GM12878 (cell line): ENCODE measurements at regions of chr15 and their contacts with region 1.

Region 1: GRCh38 chr15:30991255-30992072 is at the start of gene MTMR10:
- DNase-seq: no peak
- ATAC-seq: peak; percentile 96
- H3K4me3 ChIP-seq: peak within 1 kb of the TSS; percentile 99
- H3K27ac ChIP-seq: peak within 1 kb of the TSS; percentile 78
- H3K4me1 ChIP-seq: peaks cover 5% of the 10 kb centered on the region; the same call in 1 of the 2 replicates
- H3K27me3 ChIP-seq: no peaks in the 10 kb centered on the region
- CTCF ChIP-seq: no peak
- EP300 ChIP-seq: no peak
- POLR2A ChIP-seq: peak; percentile 94
- RAD21 ChIP-seq: 0 out of 2 replicates have a peak, but pooled peaks have one; percentile 4
- polyA plus RNA-seq, gene MTMR10: 1.9 to 3.6 TPM

Region 2: DNA sequence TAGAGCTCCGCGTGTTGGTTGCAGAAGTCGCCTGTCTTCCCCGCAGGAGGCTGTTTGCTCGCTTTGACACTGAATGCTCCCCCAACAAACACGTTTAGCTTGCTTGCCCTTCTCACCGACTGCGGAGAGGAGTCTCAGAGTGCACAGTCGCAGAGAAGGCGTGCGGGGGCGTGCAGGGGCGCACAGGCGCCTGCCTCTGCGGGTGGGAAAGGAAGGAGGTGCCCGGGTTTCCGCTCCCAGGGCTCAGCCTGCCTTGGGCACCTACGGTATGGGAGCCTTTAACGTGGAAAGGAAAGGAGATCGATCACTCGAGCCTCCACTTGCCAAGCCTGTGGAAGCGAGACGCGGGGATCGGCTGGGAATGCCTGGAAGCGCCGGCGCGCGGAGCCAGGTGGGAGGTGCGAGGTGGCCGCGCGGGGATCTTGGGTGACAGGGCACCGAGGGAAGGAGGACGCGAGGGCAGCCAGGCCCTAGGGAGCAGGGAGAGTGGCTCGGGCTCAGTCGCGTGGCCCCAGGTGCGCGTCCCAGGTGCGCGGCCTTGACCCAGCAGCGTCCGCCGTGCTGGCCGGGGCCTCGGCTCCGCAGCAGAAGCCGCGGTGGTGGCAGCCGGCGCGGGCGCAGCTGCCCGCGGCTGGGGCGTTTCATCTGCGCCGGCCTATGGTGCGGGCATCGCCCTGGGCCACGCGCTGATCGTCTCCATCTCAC is 87.8 kb before region 1 on chr15 and contains the start of gene FAN1:
- CTCF ChIA-PET with region 1: no interaction called
- POLR2A ChIA-PET with region 1: no interaction called
- RAD21 ChIA-PET with region 1: interaction called, 4 read pairs
- SMC1A ChIA-PET with region 1: no interaction called
- in situ Hi-C with region 1: no loop called
- intact Hi-C with region 1: loop called (anchors 5 kb)
- DNase-seq: peak; percentile 77
- ATAC-seq: peak; percentile 94
- H3K4me3 ChIP-seq: peak within 1 kb of the TSS; percentile 73
- H3K27ac ChIP-seq: peak within 1 kb of the TSS; percentile 68
- H3K4me1 ChIP-seq: no peaks in the 10 kb centered on the region
- H3K27me3 ChIP-seq: no peaks in the 10 kb centered on the region
- CTCF ChIP-seq: no peak
- EP300 ChIP-seq: no peak
- POLR2A ChIP-seq: peak; percentile 93
- RAD21 ChIP-seq: no peak
- polyA plus RNA-seq, gene FAN1: 0.55 to 1.0 TPM

Region 3: GRCh38 chr15:31004220-31004733 is 12.8 kb after region 1 on chr15:
- CTCF ChIA-PET with region 1: interaction called, 3 read pairs
- POLR2A ChIA-PET with region 1: interaction called, 4 read pairs
- RAD21 ChIA-PET with region 1: interaction called, 4 read pairs
- SMC1A ChIA-PET with region 1: interaction called, 4 read pairs
- in situ Hi-C with region 1: no loop called
- intact Hi-C with region 1: loop called (anchors 1 kb)
- DNase-seq: peak; percentile 99
- ATAC-seq: peak; percentile 95
- H3K4me3 ChIP-seq: 0 out of 2 replicates have a peak overlapping the region, but pooled peaks have one; percentile 14
- H3K27ac ChIP-seq: peak overlapping the region; percentile 29
- H3K4me1 ChIP-seq: peaks cover 19% of the 10 kb centered on the region
- H3K27me3 ChIP-seq: no peaks in the 10 kb centered on the region
- CTCF ChIP-seq: no peak
- EP300 ChIP-seq: peak; percentile 74 to 92; a peak in 3 of 4 replicates
- POLR2A ChIP-seq: peak; percentile 52; the same call in 1 of the 2 replicates
- RAD21 ChIP-seq: 0 out of 2 replicates have a peak, but pooled peaks have one; percentile 15

Region 4: GRCh38 chr15:31013538-31014228 is 22.2 kb after region 1 on chr15:
- CTCF ChIA-PET with region 1: interaction called, 3 read pairs
- POLR2A ChIA-PET with region 1: interaction called, 3 read pairs
- RAD21 ChIA-PET with region 1: interaction called, 13 read pairs
- SMC1A ChIA-PET with region 1: interaction called, 5 read pairs
- in situ Hi-C with region 1: no loop called
- intact Hi-C with region 1: no loop called
- DNase-seq: peak; percentile 65
- ATAC-seq: peak; percentile 100
- H3K4me3 ChIP-seq: no peak overlapping the region
- H3K27ac ChIP-seq: peak overlapping the region; percentile 75
- H3K4me1 ChIP-seq: peaks cover 17% of the 10 kb centered on the region
- H3K27me3 ChIP-seq: no peaks in the 10 kb centered on the region
- CTCF ChIP-seq: no peak
- EP300 ChIP-seq: no peak
- POLR2A ChIP-seq: peak; percentile 40; the same call in 1 of the 2 replicates
- RAD21 ChIP-seq: no peak

Region 5: DNA sequence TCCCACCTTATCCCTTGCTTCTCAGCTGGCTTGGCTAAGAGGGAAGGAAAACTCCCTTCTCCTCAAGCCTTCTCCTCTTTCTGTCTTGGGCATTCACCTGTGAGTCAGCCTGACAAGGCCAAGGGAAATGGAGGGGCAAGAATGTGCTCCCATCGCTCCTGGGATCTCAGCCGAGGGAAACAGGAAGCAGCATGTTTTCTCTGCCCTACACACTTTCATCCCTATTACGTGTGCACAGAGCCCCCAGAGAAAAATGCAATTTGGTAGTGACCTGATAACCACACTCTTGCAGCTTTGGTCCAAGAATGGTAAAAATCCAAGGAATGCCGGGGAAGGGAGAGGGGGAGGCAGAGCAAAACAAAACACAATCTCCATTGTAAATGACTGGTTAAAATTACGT is 32.9 kb after region 1 on chr15:
- CTCF ChIA-PET with region 1: no interaction called
- POLR2A ChIA-PET with region 1: no interaction called
- RAD21 ChIA-PET with region 1: no interaction called
- SMC1A ChIA-PET with region 1: no interaction called
- in situ Hi-C with region 1: no loop called
- intact Hi-C with region 1: no loop called
- DNase-seq: no peak
- ATAC-seq: no peak
- H3K4me3 ChIP-seq: no peak overlapping the region
- H3K27ac ChIP-seq: no peak overlapping the region
- H3K4me1 ChIP-seq: peaks cover 4% of the 10 kb centered on the region
- H3K27me3 ChIP-seq: no peaks in the 10 kb centered on the region
- CTCF ChIP-seq: no peak
- EP300 ChIP-seq: no peak
- POLR2A ChIP-seq: no peak
- RAD21 ChIP-seq: no peak